ENCODE measurements at regions of chr11 and their contacts with region 1.

Region 1: GRCh38 chr11:37040921-37041320 is 442.9 kb upstream of the RAG2 start:
- DNase-seq: no peak
- ATAC-seq: no peak

Region 2: DNA sequence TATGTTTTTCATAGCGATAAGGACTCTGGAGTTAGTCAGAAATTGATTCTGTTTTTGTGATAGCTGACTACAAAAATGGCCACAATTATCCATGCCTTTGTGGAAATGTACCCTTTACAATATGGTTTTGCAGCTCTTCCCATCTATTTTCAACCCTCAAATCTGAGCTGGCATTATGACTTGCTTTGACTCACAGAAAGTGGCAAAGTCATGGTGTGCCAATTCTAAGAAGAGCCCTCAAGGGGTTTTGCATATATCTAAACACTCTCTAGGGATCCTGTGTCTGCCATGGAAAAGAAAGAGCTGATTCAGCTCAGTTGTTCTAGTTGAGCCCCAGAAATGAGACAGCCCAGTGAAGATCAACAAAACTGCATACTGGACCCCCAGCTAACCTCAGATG is 52.4 kb before region 1 on chr11:
- intact Hi-C with region 1: loop called (anchors 10 kb)
- DNase-seq: no peak
- ATAC-seq: no peak

Region 3: GRCh38 chr11:38060920-38061319 is 1020.0 kb after region 1 on chr11:
- intact Hi-C with region 1: loop called (anchors 5 kb)
- DNase-seq: no peak
- ATAC-seq: no peak

Measured in left ventricle myocardium superior (tissue), 1 donor.